Prostate gland (tissue), 2 donors: ENCODE measurements at regions of chr17 and their contacts with region 1.

Region 1: DNA sequence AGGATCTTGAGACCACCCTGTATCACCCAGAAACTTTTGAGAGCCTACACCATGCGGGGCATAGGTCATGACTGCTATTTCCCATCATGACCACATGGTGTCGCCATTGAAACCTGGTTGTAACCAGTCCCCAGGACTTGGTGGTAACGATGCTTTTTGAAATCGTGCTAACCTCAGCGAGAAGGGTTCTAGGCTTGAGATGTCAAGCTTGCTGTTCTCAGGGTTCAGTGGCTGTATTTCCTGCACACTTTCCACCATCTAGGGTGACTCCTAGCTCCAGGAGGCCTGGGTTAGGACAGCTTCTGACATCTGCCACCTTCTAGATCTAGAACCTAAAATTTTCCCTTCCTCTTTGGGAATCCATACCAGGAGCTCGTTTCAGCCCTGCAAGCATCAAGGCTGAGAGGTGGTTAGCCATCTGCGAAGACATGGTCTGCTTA is 13.0 kb upstream of the SPNS3 start:
- DNase-seq: peak; percentile 50
- H3K4me3 ChIP-seq: no peak overlapping the region
- H3K27ac ChIP-seq: no peak overlapping the region
- H3K4me1 ChIP-seq: no peaks in the 10 kb centered on the region
- H3K27me3 ChIP-seq: no peaks in the 10 kb centered on the region
- CTCF ChIP-seq: peak; percentile 39 to 86 (median 69)
- POLR2A ChIP-seq: no peak

Region 2: DNA sequence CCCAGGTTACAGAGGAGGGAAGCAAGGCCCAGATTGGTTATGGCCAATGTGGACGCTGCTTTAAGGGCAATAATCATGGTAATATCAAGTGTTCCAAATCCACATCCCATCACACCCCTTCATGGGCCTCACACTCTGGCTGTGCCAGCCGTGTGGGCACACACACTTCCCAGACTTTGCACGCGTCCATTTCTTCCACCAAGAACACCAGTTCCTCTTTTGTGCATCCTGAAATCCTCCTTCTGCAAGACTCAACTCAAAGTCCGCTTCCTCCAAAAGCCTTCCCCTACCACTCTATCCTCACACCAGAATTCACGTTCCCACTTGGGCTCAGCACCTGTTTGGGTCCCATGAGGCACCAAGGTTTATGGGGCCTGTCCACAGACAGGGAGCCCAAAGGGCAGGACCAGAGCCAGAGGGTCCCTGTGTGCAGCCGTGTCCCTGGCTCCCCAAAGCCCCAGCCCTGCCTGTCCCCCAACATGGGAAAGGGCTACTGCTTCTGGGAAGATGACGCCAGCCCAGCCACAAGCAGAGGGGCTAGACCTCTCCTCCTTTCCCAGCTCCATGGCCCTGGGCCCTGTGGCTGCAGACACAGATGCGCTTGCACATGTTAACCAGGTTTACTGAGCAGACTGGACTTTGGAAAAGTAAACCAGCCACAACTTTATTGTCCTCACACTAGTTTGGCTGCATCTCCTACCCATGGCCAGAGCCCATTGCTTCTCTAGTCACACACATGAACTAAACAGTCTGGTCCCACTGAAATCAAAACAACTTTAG is 33.3 kb after region 1 on chr17:
- intact Hi-C with region 1: no loop called
- DNase-seq: no peak
- H3K4me3 ChIP-seq: no peak overlapping the region
- H3K27ac ChIP-seq: no peak overlapping the region
- H3K4me1 ChIP-seq: no peaks in the 10 kb centered on the region
- H3K27me3 ChIP-seq: no peaks in the 10 kb centered on the region
- CTCF ChIP-seq: no peak
- POLR2A ChIP-seq: no peak

Region 3: DNA sequence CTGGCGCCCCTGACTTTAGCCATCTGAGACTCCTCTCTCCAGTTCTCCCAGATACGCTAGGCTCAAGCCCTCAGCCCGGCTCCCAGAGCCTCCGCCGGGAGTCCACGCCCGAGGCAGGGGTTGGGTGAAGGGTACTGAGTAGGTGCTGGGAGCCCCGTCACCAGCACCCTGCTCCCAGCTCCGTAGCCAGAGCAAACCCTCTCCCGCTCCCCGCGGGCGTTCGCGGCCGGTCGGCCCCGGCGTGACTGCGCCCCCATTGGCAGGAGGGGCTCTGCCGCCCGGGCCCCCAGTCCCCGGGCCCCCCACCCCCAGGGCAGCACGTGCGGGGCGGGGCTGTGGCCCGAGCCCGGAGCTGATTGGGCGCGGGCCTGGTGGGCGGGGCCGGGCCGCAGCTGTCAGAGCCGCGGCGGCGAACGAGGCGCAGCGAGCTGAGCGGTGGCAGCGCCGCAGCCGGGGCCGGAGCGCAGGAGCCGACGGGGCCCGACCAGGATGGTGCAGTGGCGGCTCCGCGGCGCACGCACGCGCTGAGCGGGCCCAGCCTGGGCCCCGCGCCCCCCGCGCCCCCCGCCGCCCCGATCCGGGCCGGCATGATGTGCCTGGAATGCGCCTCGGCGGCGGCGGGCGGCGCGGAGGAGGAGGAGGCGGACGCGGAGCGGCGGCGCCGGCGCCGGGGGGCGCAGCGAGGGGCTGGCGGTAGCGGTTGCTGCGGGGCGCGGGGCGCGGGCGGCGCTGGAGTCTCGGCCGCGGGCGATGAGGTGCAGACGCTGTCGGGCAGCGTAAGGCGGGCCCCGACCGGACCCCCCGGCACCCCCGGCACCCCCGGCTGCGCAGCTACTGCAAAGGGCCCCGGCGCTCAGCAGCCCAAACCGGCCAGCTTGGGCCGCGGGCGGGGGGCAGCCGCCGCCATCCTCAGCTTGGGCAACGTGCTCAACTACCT is 78.0 kb after region 1 on chr17 and contains the start of gene SPNS2:
- intact Hi-C with region 1: no loop called
- DNase-seq: peak; percentile 50
- H3K4me3 ChIP-seq: peak within 1 kb of the TSS; percentile 21 to 33
- H3K27ac ChIP-seq: no peak within 1 kb of the TSS
- H3K4me1 ChIP-seq: peaks cover 3% of the 10 kb centered on the region
- H3K27me3 ChIP-seq: peaks cover 8% of the 10 kb centered on the region
- CTCF ChIP-seq: no peak
- POLR2A ChIP-seq: peak; percentile 31
- total RNA-seq, gene SPNS2: 6.6 to 14.0 TPM

Region 4: DNA sequence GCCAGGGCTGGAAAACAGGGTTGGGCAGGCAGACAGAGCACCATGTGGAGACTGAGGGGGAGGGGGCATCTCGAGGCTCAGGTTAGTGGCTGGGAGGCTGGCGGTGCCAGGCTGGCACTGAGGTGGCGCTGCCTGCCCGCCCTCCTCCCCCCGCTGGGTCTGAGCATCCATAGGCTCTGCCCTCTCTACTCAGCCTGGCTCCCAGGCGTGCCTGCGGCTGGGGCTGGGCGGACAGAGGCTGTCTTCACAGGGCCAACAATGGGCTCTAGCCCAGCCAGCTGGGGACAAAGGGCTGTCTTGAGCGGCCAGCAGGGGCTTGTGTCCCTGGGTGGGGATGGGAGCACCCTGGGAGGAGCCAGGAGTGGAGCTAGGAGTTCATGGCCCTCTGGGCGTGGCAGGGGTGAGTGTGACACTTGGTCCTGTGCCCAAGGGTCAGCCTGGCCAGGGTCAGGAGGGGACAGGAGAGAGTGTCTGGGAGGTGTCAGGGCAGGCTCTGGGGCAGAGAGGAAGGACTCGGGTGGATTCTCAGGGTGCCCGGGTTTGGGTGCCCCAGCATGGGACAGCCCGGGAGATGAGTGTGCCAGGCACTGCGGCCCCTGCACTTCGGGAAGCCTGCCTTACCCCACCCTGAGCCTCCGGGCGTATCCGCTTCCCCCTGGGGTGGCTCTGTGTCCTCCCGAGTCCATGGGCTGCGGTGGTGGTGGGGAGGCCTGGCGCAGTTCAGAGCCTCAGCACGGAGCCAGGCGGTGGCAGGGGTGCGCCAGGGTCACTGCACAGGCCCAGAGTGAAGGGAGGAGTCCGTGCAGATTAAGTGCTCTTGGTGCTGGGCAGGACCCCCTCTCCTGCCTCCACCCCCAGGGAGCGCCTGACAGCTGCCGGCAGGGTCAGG is 113.6 kb after region 1 on chr17:
- intact Hi-C with region 1: loop called (anchors 10 kb)
- DNase-seq: no peak
- H3K4me3 ChIP-seq: no peak overlapping the region
- H3K27ac ChIP-seq: no peak overlapping the region
- H3K4me1 ChIP-seq: no peaks in the 10 kb centered on the region
- H3K27me3 ChIP-seq: no peaks in the 10 kb centered on the region
- CTCF ChIP-seq: no peak
- POLR2A ChIP-seq: no peak

Region 5: GRCh38 chr17:4544951-4545216 is 124.2 kb after region 1 on chr17:
- intact Hi-C with region 1: no loop called
- DNase-seq: no peak
- H3K4me3 ChIP-seq: no peak overlapping the region
- H3K27ac ChIP-seq: no peak overlapping the region
- H3K4me1 ChIP-seq: no peaks in the 10 kb centered on the region
- H3K27me3 ChIP-seq: no peaks in the 10 kb centered on the region
- CTCF ChIP-seq: no peak
- POLR2A ChIP-seq: no peak

Region 6: DNA sequence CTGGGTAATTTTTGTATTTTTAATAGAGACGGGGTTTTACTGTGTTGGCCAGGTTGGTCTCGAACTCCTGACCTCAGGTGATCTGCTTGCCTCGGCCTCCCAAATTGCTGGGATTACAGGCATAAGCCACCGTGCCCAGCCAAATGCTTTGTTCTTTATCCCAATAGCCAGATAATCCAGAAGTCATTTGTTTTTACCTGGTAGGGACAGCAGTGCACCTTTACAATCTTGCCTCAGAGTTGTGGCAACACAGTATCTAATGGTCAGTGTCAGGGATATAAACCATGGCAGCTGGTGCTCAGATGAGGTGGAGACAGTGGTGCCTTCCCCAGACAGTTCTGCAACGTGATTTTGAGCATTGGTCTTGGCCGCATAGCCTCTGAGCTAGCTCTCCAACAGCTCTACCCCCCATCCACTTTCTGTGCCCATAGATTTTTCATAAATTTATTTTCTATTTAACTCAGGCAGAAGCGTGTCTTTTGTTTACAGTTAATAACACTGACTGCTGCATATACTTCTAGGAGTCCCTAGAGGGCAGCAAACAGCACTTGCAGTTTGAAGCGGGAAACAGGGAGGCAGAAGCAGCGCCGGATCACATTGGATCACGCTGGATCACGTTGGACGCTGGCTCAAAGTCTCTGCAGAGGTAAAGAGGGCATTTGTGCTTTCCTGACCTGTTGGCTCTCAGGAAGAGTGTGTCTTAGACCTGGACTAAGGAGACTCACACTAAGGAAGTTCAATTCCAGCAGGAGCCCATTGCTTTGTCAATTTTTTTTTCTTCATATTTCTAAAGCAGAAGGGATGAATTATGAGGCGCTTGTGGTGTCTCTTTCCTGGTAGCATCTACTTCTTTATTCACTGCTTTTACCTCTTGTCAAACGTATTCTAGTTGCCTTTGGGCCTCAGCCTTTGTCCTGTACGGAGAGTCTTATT is 144.8 kb after region 1 on chr17:
- intact Hi-C with region 1: loop called (anchors 10 kb)
- DNase-seq: peak; percentile 51
- H3K4me3 ChIP-seq: no peak overlapping the region
- H3K27ac ChIP-seq: no peak overlapping the region
- H3K4me1 ChIP-seq: no peaks in the 10 kb centered on the region
- H3K27me3 ChIP-seq: no peaks in the 10 kb centered on the region
- CTCF ChIP-seq: peak; percentile 38 to 76 (median 52)
- POLR2A ChIP-seq: no peak

Region 7: GRCh38 chr17:4625181-4625617 is 204.5 kb after region 1 on chr17:
- intact Hi-C with region 1: loop called (anchors 5 kb)
- DNase-seq: no peak
- H3K4me3 ChIP-seq: no peak overlapping the region
- H3K27ac ChIP-seq: no peak overlapping the region
- H3K4me1 ChIP-seq: no peaks in the 10 kb centered on the region
- H3K27me3 ChIP-seq: no peaks in the 10 kb centered on the region
- CTCF ChIP-seq: no peak
- POLR2A ChIP-seq: no peak

Region 8: GRCh38 chr17:4796553-4796921 is 375.8 kb after region 1 on chr17:
- intact Hi-C with region 1: no loop called
- DNase-seq: no peak
- H3K4me3 ChIP-seq: peak overlapping the region; percentile 59 to 67
- H3K27ac ChIP-seq: peak overlapping the region; percentile 65 to 66
- H3K4me1 ChIP-seq: peaks cover 3% of the 10 kb centered on the region
- H3K27me3 ChIP-seq: no peaks in the 10 kb centered on the region
- CTCF ChIP-seq: no peak
- POLR2A ChIP-seq: no peak